ENCODE measurements at regions of chr19 and their contacts with region 1.

Region 1: GRCh38 chr19:29665215-29665825 is at the start of gene PLEKHF1:
- DNase-seq: peak; percentile 91
- H3K4me3 Mint-ChIP-seq: peak within 1 kb of the TSS; percentile 82
- H3K27ac Mint-ChIP-seq: peak within 1 kb of the TSS; percentile 99
- H3K4me1 Mint-ChIP-seq: peaks cover 64% of the 10 kb centered on the region
- H3K27me3 Mint-ChIP-seq: no peaks in the 10 kb centered on the region
- total RNA-seq, gene PLEKHF1: 23.6 to 24.3 TPM

Region 2: DNA sequence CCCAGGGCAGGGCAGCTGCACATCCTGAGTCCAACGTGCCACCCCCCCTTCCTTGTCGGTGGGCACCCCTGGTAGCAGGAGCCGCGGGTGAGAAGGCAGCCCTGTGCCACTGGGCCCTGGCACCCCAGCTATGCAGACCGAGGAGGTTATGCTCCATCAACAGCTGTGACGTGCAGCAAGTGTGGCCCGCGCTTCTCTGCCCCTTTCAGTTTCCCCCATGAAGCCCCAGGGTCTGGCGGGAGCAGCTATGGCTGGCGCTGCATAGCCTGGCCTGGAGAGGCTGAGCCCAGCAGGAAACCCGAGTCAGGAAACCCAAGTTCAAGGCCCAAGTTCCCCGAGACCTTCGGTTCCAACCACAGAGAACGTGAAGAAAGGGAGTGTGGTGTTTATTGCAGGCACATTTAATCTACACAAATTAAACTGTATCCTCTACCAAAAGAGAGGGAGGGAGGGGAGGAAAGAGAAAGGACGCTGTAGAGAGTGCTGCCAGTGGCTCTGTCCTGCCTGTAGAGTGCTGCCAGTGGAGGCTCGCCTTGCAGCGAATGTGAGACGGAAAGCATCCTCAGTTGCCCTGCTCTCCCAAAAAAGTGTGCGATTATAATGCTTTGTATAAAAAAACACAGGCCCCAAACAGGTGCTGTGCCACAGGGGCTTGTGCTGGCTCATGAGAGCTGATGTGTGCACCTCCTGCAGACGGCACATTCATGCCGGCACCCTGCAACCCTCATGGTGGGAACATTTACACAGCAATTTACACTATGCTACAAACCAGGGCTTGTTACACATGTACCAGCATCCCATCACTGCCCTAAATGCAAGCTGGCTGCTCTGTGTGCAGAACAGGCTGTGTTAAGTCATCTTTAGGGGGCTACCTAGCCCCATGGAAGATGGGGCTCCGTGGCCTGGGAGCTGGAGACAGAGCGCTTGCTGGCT is 42.9 kb before region 1 on chr19:
- CTCF ChIA-PET with region 1: interaction called, 9 read pairs
- POLR2A ChIA-PET with region 1: interaction called, 7 read pairs
- intact Hi-C with region 1: loop called (anchors 1 kb)
- DNase-seq: peak; percentile 32
- H3K4me3 Mint-ChIP-seq: no peak overlapping the region
- H3K27ac Mint-ChIP-seq: no peak overlapping the region
- H3K4me1 Mint-ChIP-seq: peaks cover 43% of the 10 kb centered on the region
- H3K27me3 Mint-ChIP-seq: no peaks in the 10 kb centered on the region

Region 3: GRCh38 chr19:29680447-29680846 is 15.1 kb after region 1 on chr19:
- CTCF ChIA-PET with region 1: interaction called, 21 read pairs
- POLR2A ChIA-PET with region 1: interaction called, 37 read pairs
- intact Hi-C with region 1: loop called (anchors 1 kb)
- DNase-seq: peak; percentile 94
- H3K4me3 Mint-ChIP-seq: peak overlapping the region; percentile 63
- H3K27ac Mint-ChIP-seq: peak overlapping the region; percentile 89
- H3K4me1 Mint-ChIP-seq: peaks cover 58% of the 10 kb centered on the region
- H3K27me3 Mint-ChIP-seq: no peaks in the 10 kb centered on the region

Region 4: GRCh38 chr19:29694669-29695627 is 29.6 kb after region 1 on chr19:
- CTCF ChIA-PET with region 1: interaction called, 30 read pairs
- POLR2A ChIA-PET with region 1: interaction called, 6 read pairs
- intact Hi-C with region 1: no loop called
- DNase-seq: peak; percentile 87
- H3K4me3 Mint-ChIP-seq: no peak overlapping the region
- H3K27ac Mint-ChIP-seq: no peak overlapping the region
- H3K4me1 Mint-ChIP-seq: peaks cover 11% of the 10 kb centered on the region
- H3K27me3 Mint-ChIP-seq: no peaks in the 10 kb centered on the region

Region 5: GRCh38 chr19:29811125-29812079 is 146.1 kb after region 1 on chr19 and contains the start of gene CCNE1:
- CTCF ChIA-PET with region 1: no interaction called
- POLR2A ChIA-PET with region 1: no interaction called
- intact Hi-C with region 1: no loop called
- DNase-seq: peak; percentile 96
- H3K4me3 Mint-ChIP-seq: peak within 1 kb of the TSS; percentile 82
- H3K27ac Mint-ChIP-seq: peak within 1 kb of the TSS; percentile 86
- H3K4me1 Mint-ChIP-seq: peaks cover 17% of the 10 kb centered on the region
- H3K27me3 Mint-ChIP-seq: no peaks in the 10 kb centered on the region
- total RNA-seq, gene CCNE1: 29.3 to 29.7 TPM

Measured in activated CD4-positive, alpha-beta memory T cell treated with anti-CD3 and anti-CD28 coated beads for 36 hours (primary cell).